ENCODE measurements at regions of chr16 and their contacts with region 1.

Region 1: GRCh38 chr16:4660454-4661007 is 32.8 kb upstream of the NUDT16L1 start:
- DNase-seq: peak in 8 of 9 donors; percentile 49 to 81 (median 73)
- ATAC-seq: peak; percentile 60
- H3K4me3 ChIP-seq: no peak overlapping the region
- H3K4me3 Mint-ChIP-seq: peak overlapping the region in 9 of 10 donors; percentile 48 to 78 (median 62)
- H3K27ac ChIP-seq: peak overlapping the region; percentile 74
- H3K27ac Mint-ChIP-seq: peak overlapping the region; percentile 88 to 96 (median 92)
- H3K4me1 ChIP-seq: peaks cover 34 to 65% of the 10 kb centered on the region in 2 donors
- H3K4me1 Mint-ChIP-seq: peaks cover 38 to 72% (median 64%) of the 10 kb centered on the region in 7 donors
- H3K27me3 ChIP-seq: no peaks in the 10 kb centered on the region
- H3K27me3 Mint-ChIP-seq: no peaks in the 10 kb centered on the region

Region 2: DNA sequence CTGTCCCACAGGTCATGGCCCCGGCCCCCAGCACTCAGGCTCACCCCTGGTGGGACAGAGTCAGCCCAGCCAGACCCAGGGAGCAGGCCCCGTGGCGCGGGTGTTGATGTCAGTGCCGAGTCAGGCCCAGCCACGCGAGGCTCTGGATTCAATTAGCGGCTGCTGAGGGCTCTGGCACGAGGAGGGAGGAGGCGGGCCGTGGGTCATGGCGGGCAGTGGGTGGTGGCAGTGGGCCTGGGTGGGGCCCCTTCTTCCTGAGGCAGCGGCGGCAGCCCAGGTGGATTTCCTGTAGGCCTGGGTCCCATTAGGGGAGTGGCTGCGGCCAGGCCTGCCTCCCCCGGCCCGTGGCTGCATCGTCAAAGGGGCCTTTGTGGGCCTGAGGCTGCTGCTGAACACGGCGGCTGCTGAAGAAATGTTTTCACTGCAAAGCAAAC is 276.0 kb before region 1 on chr16:
- CTCF ChIA-PET with region 1: no interaction called
- POLR2A ChIA-PET with region 1: no interaction called
- intact Hi-C with region 1: no loop called
- DNase-seq: peak in 1 of 9 donors; percentile 19
- ATAC-seq: no peak
- H3K4me3 ChIP-seq: no peak overlapping the region
- H3K4me3 Mint-ChIP-seq: no peak overlapping the region
- H3K27ac ChIP-seq: no peak overlapping the region
- H3K27ac Mint-ChIP-seq: no peak overlapping the region
- H3K4me1 ChIP-seq: no peaks in the 10 kb centered on the region
- H3K4me1 Mint-ChIP-seq: peaks cover 0 to 9% (median 3%) of the 10 kb centered on the region in 7 donors
- H3K27me3 ChIP-seq: no peaks in the 10 kb centered on the region
- H3K27me3 Mint-ChIP-seq: no peaks in the 10 kb centered on the region

Region 3: GRCh38 chr16:4646773-4647643 is 13.5 kb before region 1 on chr16:
- CTCF ChIA-PET with region 1: interaction called, 6 read pairs
- POLR2A ChIA-PET with region 1: interaction called, 5 read pairs
- intact Hi-C with region 1: loop called in 1 of 2 experiments (anchors 2 kb)
- DNase-seq: peak in 5 of 9 donors; percentile 31 to 47 (median 36)
- ATAC-seq: peak; percentile 57
- H3K4me3 ChIP-seq: no peak overlapping the region
- H3K4me3 Mint-ChIP-seq: peak overlapping the region in 9 of 10 donors; percentile 5 to 79 (median 62)
- H3K27ac ChIP-seq: peak overlapping the region; percentile 61
- H3K27ac Mint-ChIP-seq: peak overlapping the region; percentile 42 to 95 (median 82)
- H3K4me1 ChIP-seq: peaks cover 0 to 44% of the 10 kb centered on the region in 2 donors
- H3K4me1 Mint-ChIP-seq: peaks cover 33 to 56% (median 43%) of the 10 kb centered on the region in 7 donors
- H3K27me3 ChIP-seq: no peaks in the 10 kb centered on the region
- H3K27me3 Mint-ChIP-seq: no peaks in the 10 kb centered on the region

Region 4: GRCh38 chr16:4675864-4676786 is 15.6 kb after region 1 on chr16:
- CTCF ChIA-PET with region 1: no interaction called
- POLR2A ChIA-PET with region 1: interaction called, 10 read pairs
- intact Hi-C with region 1: loop called (anchors 1 kb)
- DNase-seq: peak in 8 of 9 donors; percentile 62 to 80 (median 76)
- ATAC-seq: peak; percentile 82
- H3K4me3 ChIP-seq: peak overlapping the region; percentile 32
- H3K4me3 Mint-ChIP-seq: peak overlapping the region; percentile 57 to 86 (median 84)
- H3K27ac ChIP-seq: peak overlapping the region; percentile 78
- H3K27ac Mint-ChIP-seq: peak overlapping the region; percentile 92 to 99 (median 98)
- H3K4me1 ChIP-seq: peaks cover 19 to 28% of the 10 kb centered on the region in 2 donors
- H3K4me1 Mint-ChIP-seq: peaks cover 29 to 36% (median 31%) of the 10 kb centered on the region in 7 donors
- H3K27me3 ChIP-seq: no peaks in the 10 kb centered on the region
- H3K27me3 Mint-ChIP-seq: no peaks in the 10 kb centered on the region